PC-9 (cell line): ENCODE measurements at regions of chr13 and their contacts with region 1.

Region 1: DNA sequence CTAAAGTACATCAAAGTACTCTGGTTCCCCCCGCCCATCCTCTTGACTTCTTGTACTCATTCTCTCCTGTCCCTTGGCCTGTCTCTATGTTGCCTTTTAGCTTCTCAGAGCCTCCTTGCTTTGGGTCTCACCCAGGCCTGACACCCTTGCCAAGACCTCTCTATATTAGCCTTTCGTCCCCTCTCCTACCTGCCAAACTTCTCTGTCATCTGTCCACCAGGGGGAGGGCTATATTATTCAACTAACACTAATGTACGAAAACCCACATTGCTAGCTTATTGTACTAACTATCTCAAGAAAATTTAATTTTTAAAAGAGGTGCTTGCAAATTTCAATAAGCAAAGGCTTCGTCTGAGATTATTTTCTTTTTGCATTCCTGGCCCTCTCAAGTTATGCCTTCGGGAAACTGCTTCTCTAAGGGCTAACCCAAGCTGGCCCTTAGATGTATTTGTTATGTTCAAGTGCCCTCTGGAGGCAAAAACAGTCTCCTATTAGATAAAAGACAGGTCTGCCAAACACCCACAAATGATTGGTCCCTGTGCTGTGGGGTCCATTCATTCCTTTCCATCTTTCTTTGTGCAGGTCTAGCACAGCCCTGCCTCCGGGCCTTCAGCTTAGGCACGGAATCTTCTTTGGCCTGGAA is 6.3 kb upstream of the MRPS31 start:
- DNase-seq: peak; percentile 23 to 44
- H3K4me3 ChIP-seq: peak overlapping the region; percentile 51; the same call in 1 of the 2 replicates
- H3K27ac ChIP-seq: no peak overlapping the region
- H3K4me1 ChIP-seq: peaks cover 6% of the 10 kb centered on the region; the same call in 1 of the 2 replicates
- H3K27me3 ChIP-seq: no peaks in the 10 kb centered on the region
- CTCF ChIP-seq: peak; percentile 84

Region 2: GRCh38 chr13:39684531-39685137 is 1092.7 kb before region 1 on chr13:
- CTCF ChIA-PET with region 1: no interaction called
- POLR2A ChIA-PET with region 1: no interaction called
- intact Hi-C with region 1: loop called (anchors 5 kb)
- DNase-seq: peak in 1 of 2 experiments; percentile 42
- H3K4me3 ChIP-seq: no peak overlapping the region
- H3K27ac ChIP-seq: no peak overlapping the region
- H3K4me1 ChIP-seq: no peaks in the 10 kb centered on the region
- H3K27me3 ChIP-seq: no peaks in the 10 kb centered on the region
- CTCF ChIP-seq: peak; percentile 66

Region 3: DNA sequence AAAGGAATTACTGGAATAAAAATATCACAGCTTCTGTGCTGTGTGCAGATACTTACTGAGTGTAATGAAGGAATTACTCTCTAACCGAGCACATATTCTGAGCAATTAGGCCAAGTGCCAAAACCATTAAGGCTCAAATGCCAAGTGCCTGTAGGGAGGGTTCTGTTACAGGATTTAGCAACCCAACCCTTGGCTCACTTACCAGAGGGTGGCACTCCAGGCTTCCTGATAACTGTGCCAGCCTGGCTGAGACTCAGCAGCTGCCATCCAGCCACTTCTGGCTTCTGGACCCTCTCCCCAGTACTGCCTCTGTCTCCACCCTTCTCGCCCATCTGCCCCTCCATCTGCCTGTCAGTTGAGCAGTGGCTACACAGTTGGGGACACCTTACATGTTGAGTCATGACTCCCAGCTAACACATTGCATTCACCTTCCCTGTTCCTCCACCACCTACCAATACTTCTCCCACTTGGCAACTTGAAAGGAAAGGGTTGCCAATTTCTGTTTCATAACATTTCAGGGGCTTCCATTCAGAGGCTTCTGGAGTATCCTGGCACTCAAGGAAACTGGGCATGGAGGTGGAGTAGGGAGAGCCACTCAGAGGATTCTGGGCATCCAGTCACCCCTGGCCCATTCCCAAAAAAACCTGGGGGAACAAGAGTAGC is 1011.4 kb before region 1 on chr13:
- CTCF ChIA-PET with region 1: no interaction called
- POLR2A ChIA-PET with region 1: no interaction called
- intact Hi-C with region 1: loop called (anchors 5 kb)
- DNase-seq: peak in 1 of 2 experiments; percentile 15
- H3K4me3 ChIP-seq: no peak overlapping the region
- H3K27ac ChIP-seq: no peak overlapping the region
- H3K4me1 ChIP-seq: no peaks in the 10 kb centered on the region
- H3K27me3 ChIP-seq: no peaks in the 10 kb centered on the region
- CTCF ChIP-seq: peak; percentile 39; the same call in 1 of the 2 replicates

Region 4: DNA sequence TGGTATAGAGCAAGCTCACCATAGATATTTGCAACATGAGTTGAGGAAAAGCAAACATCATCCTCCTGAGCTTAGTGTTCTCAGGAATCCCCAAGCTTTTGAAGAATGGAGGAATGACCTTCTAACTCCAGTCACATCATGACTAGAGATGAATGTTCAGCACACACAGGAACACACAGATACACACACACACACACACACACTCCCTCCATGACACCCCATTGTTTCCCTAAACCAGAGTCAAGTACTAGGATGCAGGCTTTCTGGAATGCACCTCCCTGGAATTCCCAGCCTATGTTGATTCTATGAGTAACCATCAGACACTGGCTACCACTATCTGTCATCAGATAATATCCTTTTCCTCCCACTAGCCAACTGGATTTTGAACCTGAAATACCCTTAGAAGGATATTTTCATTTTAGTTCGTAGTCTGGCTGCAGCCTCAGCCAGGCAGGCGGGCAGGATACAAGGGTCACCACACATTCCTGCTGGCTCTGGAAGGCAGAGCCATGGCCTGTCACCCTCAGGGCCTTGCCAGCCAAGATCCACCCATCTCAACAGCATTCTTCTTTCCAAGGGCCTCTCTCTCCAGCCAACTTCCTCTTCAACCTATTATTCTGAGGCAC is 273.2 kb before region 1 on chr13:
- CTCF ChIA-PET with region 1: no interaction called
- POLR2A ChIA-PET with region 1: interaction called, 23 read pairs
- intact Hi-C with region 1: no loop called
- DNase-seq: peak; percentile 42 to 53
- H3K4me3 ChIP-seq: no peak overlapping the region
- H3K27ac ChIP-seq: no peak overlapping the region
- H3K4me1 ChIP-seq: 0 out of 2 replicates have a peak, but pooled peaks cover 4% of the 10 kb centered on the region
- H3K27me3 ChIP-seq: no peaks in the 10 kb centered on the region
- CTCF ChIP-seq: no peak

Region 5: DNA sequence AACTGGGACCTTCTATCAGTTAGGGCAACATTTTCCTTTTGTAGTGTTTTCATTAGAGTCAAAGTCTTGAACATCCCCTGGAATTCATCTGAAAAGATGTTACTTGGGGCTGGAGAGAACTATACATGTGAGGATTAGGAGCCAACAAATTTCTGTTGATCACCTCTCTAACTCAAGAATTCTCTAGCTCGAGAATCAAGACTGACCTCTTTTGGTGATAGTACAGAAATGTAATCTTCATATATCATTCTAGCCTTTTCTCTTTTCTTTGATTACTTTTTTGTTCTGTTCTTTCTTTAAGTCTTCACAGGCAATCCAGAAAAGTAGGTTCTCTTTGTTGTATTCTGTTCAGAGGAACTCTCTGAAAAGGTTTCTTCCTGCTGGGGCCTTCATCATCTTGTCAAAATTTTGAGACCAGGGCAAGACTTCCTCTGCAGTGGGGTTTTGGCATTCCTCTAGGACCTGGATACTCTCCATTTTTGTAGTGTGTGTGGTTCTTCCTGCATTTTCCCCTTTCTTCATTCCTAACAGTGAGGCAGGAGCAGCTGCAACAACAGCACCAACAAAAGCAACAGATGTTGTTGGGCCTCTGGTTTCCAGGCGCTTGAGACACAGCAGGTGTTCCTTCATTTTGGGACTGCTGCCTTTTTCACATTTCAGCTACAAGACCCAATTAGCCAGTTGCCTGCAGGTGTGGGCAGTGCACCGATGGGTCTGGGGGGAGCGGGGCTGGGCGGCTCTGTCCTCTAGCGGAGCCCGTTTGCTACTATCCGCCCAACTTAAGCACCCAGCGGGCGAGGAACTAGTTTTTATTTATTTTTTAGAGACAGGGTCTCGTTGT is 215.6 kb after region 1 on chr13:
- CTCF ChIA-PET with region 1: no interaction called
- POLR2A ChIA-PET with region 1: no interaction called
- intact Hi-C with region 1: loop called (anchors 5 kb)
- DNase-seq: no peak
- H3K4me3 ChIP-seq: no peak overlapping the region; the same call in 1 of the 2 replicates
- H3K27ac ChIP-seq: peak overlapping the region; percentile 96
- H3K4me1 ChIP-seq: peaks cover 38% of the 10 kb centered on the region
- H3K27me3 ChIP-seq: no peaks in the 10 kb centered on the region
- CTCF ChIP-seq: no peak; the same call in 1 of the 2 replicates

Region 6: GRCh38 chr13:41178040-41178439 is 400.8 kb after region 1 on chr13:
- CTCF ChIA-PET with region 1: no interaction called
- POLR2A ChIA-PET with region 1: no interaction called
- intact Hi-C with region 1: no loop called
- DNase-seq: no peak
- H3K4me3 ChIP-seq: no peak overlapping the region
- H3K27ac ChIP-seq: no peak overlapping the region
- H3K4me1 ChIP-seq: no peaks in the 10 kb centered on the region
- H3K27me3 ChIP-seq: no peaks in the 10 kb centered on the region
- CTCF ChIP-seq: no peak